Right cardiac atrium (tissue), 5 donors: ENCODE measurements at regions of chr13 and their contacts with region 1.

Region 1: GRCh38 chr13:50529154-50529882 is 314.2 kb downstream of the DLEU7 start:
- DNase-seq: peak; percentile 90 to 96 (median 95)
- ATAC-seq: peak; percentile 96
- H3K4me3 ChIP-seq: peak overlapping the region; percentile 17
- H3K27ac ChIP-seq: peak overlapping the region; percentile 61
- H3K4me1 ChIP-seq: peaks cover 3% of the 10 kb centered on the region
- H3K27me3 ChIP-seq: no peaks in the 10 kb centered on the region

Region 2: GRCh38 chr13:49976314-49977258 is 552.7 kb before region 1 on chr13:
- intact Hi-C with region 1: loop called in 2 of 4 experiments (anchors 5 to 10 kb)
- DNase-seq: peak; percentile 54 to 86 (median 75)
- ATAC-seq: peak; percentile 67 to 87
- H3K4me3 ChIP-seq: no peak overlapping the region
- H3K27ac ChIP-seq: no peak overlapping the region
- H3K4me1 ChIP-seq: peaks cover 4% of the 10 kb centered on the region
- H3K27me3 ChIP-seq: no peaks in the 10 kb centered on the region

Region 3: DNA sequence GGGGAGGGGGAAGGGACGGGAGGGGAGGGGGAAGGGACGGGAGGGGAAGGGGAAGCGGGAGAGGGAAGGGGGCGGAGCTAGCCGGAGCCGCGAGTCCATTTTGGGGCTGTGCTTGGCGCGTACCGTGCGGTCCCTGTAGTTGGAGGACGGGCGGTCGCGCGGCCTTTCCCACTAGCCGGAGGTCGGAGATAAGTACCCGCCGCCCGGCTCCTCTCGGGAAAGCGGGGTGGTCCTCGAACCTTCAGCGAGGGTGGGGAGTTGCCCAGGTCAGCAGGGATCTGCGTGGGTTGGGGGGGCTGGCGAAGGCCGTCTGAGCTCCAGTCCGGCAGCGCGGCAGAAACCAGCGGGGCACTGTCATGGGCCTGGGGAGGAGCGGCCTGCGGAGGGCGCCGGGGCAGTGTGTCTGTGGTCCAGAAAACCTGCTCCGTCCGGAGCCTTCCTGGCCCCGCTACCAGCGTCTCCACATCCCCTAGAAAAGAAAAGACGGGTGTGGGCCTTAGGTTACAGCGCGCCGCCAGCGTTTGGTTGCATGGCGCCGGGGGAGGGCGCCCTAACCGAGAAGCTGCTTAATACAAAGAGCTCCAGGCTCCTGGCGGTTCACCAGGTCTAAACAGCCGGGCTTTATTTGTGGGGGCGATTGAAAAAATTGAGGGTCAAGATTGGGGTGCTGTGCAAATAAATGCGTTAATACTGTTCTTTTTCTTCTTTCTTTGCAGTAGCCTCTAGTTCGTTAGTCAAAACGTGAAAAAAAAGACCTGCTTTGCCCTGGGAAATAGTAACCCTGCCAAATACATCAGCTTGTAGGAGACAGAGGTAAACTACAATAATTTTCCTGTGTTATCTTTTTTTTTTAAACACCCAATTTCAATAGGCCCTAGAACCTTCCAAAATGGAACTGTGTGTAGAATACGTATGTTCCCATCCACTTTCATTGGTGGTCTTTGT is 532.1 kb before region 1 on chr13 and contains the start of gene TRIM13:
- intact Hi-C with region 1: loop called in 1 of 4 experiments (anchors 10 kb)
- DNase-seq: peak; percentile 92 to 97 (median 96)
- ATAC-seq: peak; percentile 91
- H3K4me3 ChIP-seq: peak within 1 kb of the TSS; percentile 89
- H3K27ac ChIP-seq: peak within 1 kb of the TSS; percentile 97
- H3K4me1 ChIP-seq: no peaks in the 10 kb centered on the region
- H3K27me3 ChIP-seq: no peaks in the 10 kb centered on the region
- total RNA-seq, gene TRIM13: 18.2 to 25.4 (median 21.8) TPM

Region 4: GRCh38 chr13:50081679-50082425 is 447.5 kb before region 1 on chr13:
- intact Hi-C with region 1: loop called in 1 of 4 experiments (anchors 10 kb)
- DNase-seq: peak; percentile 97 to 98 (median 98)
- ATAC-seq: peak; percentile 97
- H3K4me3 ChIP-seq: peak overlapping the region; percentile 89
- H3K27ac ChIP-seq: peak overlapping the region; percentile 54
- H3K4me1 ChIP-seq: no peaks in the 10 kb centered on the region
- H3K27me3 ChIP-seq: no peaks in the 10 kb centered on the region

Region 5: GRCh38 chr13:50299546-50300249 is 229.6 kb before region 1 on chr13:
- intact Hi-C with region 1: no loop called
- DNase-seq: no peak
- ATAC-seq: no peak
- H3K4me3 ChIP-seq: no peak overlapping the region
- H3K27ac ChIP-seq: no peak overlapping the region
- H3K4me1 ChIP-seq: no peaks in the 10 kb centered on the region
- H3K27me3 ChIP-seq: no peaks in the 10 kb centered on the region

Region 6: DNA sequence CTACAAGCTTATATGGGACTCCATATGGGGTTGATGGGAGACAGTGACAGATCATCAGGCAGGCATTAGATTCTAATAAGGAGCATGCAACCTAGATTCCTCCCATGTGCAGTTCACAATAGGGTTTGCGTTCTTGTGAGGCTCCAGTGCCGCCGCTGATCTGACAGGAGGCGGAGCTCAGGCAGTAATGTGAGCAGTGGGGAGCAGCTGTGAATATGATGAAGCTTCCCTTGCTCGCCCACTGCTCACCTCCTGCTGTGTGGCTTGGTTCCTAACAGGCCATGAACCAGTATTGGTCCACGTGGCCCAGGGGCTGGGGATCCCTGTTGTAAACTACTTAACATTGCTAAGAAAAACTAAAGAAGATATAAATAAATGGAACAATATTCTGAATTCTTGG is 135.7 kb before region 1 on chr13:
- intact Hi-C with region 1: loop called in 1 of 4 experiments (anchors 10 kb)
- DNase-seq: no peak
- ATAC-seq: no peak
- H3K4me3 ChIP-seq: no peak overlapping the region
- H3K27ac ChIP-seq: no peak overlapping the region
- H3K4me1 ChIP-seq: peaks cover 2% of the 10 kb centered on the region
- H3K27me3 ChIP-seq: no peaks in the 10 kb centered on the region

Region 7: GRCh38 chr13:50801087-50801931 is 272.0 kb after region 1 on chr13:
- intact Hi-C with region 1: loop called in 3 of 4 experiments (anchors 5 to 10 kb)
- DNase-seq: peak in 2 of 3 donors; percentile 37 to 52
- ATAC-seq: peak; percentile 88 to 91
- H3K4me3 ChIP-seq: no peak overlapping the region
- H3K27ac ChIP-seq: no peak overlapping the region
- H3K4me1 ChIP-seq: peaks cover 10% of the 10 kb centered on the region
- H3K27me3 ChIP-seq: no peaks in the 10 kb centered on the region

Region 8: GRCh38 chr13:50855681-50856080 is 326.4 kb after region 1 on chr13:
- intact Hi-C with region 1: no loop called
- DNase-seq: no peak
- ATAC-seq: no peak
- H3K4me3 ChIP-seq: no peak overlapping the region
- H3K27ac ChIP-seq: no peak overlapping the region
- H3K4me1 ChIP-seq: no peaks in the 10 kb centered on the region
- H3K27me3 ChIP-seq: no peaks in the 10 kb centered on the region

Region 9: DNA sequence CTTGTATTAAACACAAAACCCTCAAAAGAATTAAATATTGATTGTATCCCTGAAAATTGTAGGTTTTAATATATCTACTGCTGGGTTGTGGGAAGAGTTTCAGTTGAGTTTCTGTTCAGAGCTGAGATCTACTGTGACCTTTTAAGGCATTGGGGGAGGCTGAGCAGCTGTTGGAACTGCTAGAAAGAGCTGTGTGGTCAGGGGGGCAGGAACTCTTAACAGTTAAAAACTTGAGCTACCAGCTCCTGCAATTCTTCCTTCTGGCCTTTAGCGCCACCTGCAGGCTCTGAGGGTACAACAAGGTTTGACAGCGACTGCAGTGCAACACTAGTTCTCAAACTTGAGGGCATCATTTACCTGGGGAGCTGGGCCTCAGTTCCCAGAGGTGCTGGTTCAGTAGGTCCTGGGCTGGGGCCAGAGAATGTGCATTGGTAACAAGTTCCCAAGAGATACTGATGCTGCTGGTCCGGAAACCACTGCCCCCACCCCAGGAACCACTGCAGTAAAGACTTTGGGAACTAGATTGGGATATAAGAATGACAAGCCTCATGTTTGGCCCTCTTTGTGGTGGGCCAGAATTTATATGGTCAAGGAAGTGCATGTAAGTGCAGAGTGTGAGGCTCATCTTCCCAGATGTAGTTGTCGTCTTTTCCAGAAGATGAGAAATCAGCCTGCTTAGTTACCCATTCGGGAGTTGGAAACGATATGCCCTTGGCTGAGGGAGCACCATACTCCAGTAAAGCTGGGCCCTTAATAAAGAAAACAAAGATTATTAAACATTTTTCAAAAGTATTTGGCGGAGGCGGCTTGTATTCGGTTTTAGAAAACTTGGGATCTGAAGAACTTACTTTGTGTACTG is 382.8 kb after region 1 on chr13:
- intact Hi-C with region 1: loop called in 1 of 4 experiments (anchors 10 kb)
- DNase-seq: peak; percentile 83 to 94 (median 92)
- ATAC-seq: peak; percentile 9 to 52
- H3K4me3 ChIP-seq: no peak overlapping the region
- H3K27ac ChIP-seq: peak overlapping the region; percentile 6
- H3K4me1 ChIP-seq: peaks cover 7% of the 10 kb centered on the region
- H3K27me3 ChIP-seq: no peaks in the 10 kb centered on the region

Region 10: GRCh38 chr13:51058461-51059167 is 529.3 kb after region 1 on chr13:
- intact Hi-C with region 1: no loop called
- DNase-seq: no peak
- ATAC-seq: no peak
- H3K4me3 ChIP-seq: no peak overlapping the region
- H3K27ac ChIP-seq: no peak overlapping the region
- H3K4me1 ChIP-seq: no peaks in the 10 kb centered on the region
- H3K27me3 ChIP-seq: no peaks in the 10 kb centered on the region